CD4-positive, alpha-beta T cell (primary cell): ENCODE measurements at regions of chr20 and their contacts with region 1.

Region 1: DNA sequence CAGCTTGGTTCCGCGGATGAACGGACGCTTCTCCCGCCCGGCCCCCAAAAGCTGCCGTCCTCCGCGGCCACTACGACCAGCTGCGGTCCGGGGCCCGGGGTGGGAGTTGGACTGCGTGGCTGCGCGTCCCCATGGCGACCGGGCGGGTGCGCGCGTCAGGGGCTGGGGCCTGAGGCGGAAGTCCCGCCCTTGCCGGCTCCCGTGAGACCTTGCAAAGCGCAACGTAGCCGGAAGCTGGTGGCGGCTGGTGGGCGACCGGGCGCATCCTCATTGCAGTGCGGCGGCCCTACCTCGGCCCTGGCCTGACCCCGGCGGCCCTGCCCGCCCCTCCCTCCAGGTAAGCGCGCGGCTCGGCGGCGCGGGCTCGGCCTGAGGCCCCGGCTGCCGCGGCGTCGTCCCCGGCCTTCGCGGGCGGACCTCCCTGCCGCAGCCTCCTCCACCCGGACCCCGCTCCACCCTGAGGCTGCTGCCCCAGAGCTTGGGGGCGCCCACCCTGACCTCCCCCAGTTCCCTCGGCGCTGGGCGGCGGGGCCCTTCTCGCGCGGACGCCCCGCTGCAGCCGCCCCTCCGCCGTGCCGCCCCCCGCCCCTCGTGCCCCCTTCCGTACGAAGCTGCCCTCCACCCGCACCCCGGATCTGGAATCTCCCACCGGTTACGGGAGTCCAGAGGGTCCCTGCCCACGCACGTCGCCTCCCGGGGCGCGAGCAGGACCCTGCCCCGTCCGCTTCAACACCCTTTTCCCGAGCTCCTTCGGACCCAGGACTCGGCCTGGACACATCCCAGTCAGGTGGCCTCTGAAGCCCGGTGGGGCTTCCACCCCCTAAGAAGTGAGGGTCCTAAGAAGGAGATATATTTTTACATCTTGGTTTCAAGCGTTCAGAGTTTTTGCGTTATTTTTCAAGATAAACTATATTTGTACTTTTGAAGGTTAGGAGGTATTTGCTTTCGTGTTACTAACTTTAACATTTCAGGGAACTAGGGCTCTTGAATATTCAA is at the start of gene ARFGAP1:
- DNase-seq: peak; percentile 73 to 94 (median 84)
- ATAC-seq: peak; percentile 93
- H3K4me3 ChIP-seq: peak within 1 kb of the TSS; percentile 80
- H3K4me3 Mint-ChIP-seq: peak within 1 kb of the TSS; percentile 90
- H3K27ac ChIP-seq: no peak within 1 kb of the TSS
- H3K27ac Mint-ChIP-seq: peak within 1 kb of the TSS; percentile 82
- H3K4me1 ChIP-seq: peaks cover 26% of the 10 kb centered on the region
- H3K4me1 Mint-ChIP-seq: peaks cover 31% of the 10 kb centered on the region
- H3K27me3 ChIP-seq: no peaks in the 10 kb centered on the region
- H3K27me3 Mint-ChIP-seq: no peaks in the 10 kb centered on the region
- CTCF ChIP-seq: no peak
- total RNA-seq, gene ARFGAP1: 120 TPM

Region 2: GRCh38 chr20:62407221-62407992 is 865.5 kb before region 1 on chr20 and contains the start of gene CABLES2:
- CTCF ChIA-PET with region 1: no interaction called
- POLR2A ChIA-PET with region 1: interaction called, 3 read pairs
- intact Hi-C with region 1: loop called in 1 of 2 experiments (anchors 5 kb)
- DNase-seq: peak; percentile 83 to 96 (median 88)
- ATAC-seq: peak; percentile 95
- H3K4me3 ChIP-seq: peak within 1 kb of the TSS; percentile 72
- H3K4me3 Mint-ChIP-seq: peak within 1 kb of the TSS; percentile 84
- H3K27ac ChIP-seq: peak within 1 kb of the TSS in 1 of 2 donors; percentile 24
- H3K27ac Mint-ChIP-seq: no peak within 1 kb of the TSS
- H3K4me1 ChIP-seq: peaks cover 46% of the 10 kb centered on the region
- H3K4me1 Mint-ChIP-seq: peaks cover 18% of the 10 kb centered on the region
- H3K27me3 ChIP-seq: no peaks in the 10 kb centered on the region
- H3K27me3 Mint-ChIP-seq: no peaks in the 10 kb centered on the region
- CTCF ChIP-seq: no peak
- total RNA-seq, gene CABLES2: 4.4 TPM

Region 3: DNA sequence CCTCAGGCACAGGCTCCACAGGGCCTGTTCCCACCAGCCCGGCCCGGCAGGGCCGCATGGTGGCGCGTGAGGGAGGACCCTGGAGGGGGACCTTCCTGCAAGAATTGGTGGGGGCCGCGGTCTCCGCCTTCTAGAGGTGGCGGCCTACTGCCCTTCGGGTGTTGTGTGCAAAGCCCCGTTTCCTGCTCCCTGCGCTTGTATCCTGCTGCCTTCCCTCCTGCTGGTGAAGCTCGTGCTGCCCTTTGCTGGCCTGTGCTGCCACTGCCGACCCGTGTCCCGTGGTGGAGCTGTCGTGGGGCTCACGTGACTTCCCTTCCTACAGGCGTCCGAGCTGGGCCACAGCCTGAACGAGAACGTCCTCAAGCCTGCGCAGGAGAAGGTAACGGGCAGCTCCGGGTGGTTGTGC is 11.7 kb after region 1 on chr20:
- CTCF ChIA-PET with region 1: no interaction called
- POLR2A ChIA-PET with region 1: interaction called, 10 read pairs
- intact Hi-C with region 1: no loop called
- DNase-seq: peak in 1 of 14 experiments; percentile 11
- ATAC-seq: peak; percentile 8
- H3K4me3 ChIP-seq: peak overlapping the region; percentile 51
- H3K4me3 Mint-ChIP-seq: peak overlapping the region; percentile 84
- H3K27ac ChIP-seq: no peak overlapping the region
- H3K27ac Mint-ChIP-seq: no peak overlapping the region
- H3K4me1 ChIP-seq: peaks cover 21% of the 10 kb centered on the region
- H3K4me1 Mint-ChIP-seq: peaks cover 4% of the 10 kb centered on the region
- H3K27me3 ChIP-seq: no peaks in the 10 kb centered on the region
- H3K27me3 Mint-ChIP-seq: no peaks in the 10 kb centered on the region
- CTCF ChIP-seq: no peak

Region 4: DNA sequence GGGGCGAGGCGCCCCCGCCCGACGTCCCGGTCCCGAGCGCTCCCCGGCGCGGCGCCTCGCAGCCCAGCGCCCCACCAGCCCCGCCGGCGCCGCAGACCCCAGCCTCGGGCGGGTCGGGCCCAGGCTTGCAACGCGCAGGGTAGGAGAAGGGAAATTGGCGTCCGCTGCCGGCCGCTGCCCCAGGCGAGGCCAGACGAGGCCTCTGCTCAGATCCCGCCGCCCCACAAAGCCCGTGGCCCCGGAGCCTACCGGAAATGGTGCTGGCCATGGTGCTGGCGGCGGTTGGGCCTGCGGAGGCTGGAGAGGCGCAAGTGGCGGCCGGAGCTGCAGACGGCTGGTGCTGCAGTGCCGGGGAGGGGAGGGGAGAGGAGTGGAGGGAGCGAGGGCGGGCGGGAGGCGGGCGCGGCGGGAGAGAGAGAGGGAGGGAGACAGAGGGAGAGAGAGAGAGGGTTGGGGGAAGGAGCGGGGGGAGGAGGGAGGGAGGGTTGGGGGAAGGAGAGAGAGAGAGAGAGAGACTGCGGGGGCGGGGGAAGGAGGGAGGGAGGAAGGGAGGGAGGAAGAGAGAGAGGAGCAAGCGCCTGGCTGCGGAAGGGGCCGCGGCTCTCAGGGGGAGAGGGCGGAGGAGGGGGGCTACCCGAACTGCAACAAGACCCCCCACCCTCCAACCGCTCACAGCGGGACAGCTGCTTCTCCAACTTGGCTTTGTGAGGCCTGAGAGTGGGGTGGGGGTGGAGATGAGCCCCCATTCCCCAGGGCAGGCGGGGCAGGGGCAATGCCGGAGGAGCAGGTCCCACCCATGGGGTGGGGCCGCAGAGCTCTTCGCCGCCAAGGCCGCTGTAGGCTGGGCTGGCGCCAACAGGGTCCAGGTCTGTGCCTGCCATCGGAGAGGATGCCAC is 380.4 kb after region 1 on chr20 and contains the start of gene STMN3:
- CTCF ChIA-PET with region 1: no interaction called
- POLR2A ChIA-PET with region 1: no interaction called
- intact Hi-C with region 1: no loop called
- DNase-seq: peak in 13 of 14 experiments; percentile 46 to 85 (median 69)
- ATAC-seq: peak; percentile 39
- H3K4me3 ChIP-seq: peak within 1 kb of the TSS; percentile 70
- H3K4me3 Mint-ChIP-seq: peak within 1 kb of the TSS; percentile 97
- H3K27ac ChIP-seq: peak within 1 kb of the TSS; percentile 34 to 56
- H3K27ac Mint-ChIP-seq: peak within 1 kb of the TSS; percentile 81
- H3K4me1 ChIP-seq: peaks cover 53% of the 10 kb centered on the region
- H3K4me1 Mint-ChIP-seq: peaks cover 27% of the 10 kb centered on the region
- H3K27me3 ChIP-seq: no peaks in the 10 kb centered on the region
- H3K27me3 Mint-ChIP-seq: no peaks in the 10 kb centered on the region
- CTCF ChIP-seq: no peak
- total RNA-seq, gene STMN3: 122 to 127 TPM